ENCODE measurements at regions of chr3 and their contacts with region 1.

Region 1: DNA sequence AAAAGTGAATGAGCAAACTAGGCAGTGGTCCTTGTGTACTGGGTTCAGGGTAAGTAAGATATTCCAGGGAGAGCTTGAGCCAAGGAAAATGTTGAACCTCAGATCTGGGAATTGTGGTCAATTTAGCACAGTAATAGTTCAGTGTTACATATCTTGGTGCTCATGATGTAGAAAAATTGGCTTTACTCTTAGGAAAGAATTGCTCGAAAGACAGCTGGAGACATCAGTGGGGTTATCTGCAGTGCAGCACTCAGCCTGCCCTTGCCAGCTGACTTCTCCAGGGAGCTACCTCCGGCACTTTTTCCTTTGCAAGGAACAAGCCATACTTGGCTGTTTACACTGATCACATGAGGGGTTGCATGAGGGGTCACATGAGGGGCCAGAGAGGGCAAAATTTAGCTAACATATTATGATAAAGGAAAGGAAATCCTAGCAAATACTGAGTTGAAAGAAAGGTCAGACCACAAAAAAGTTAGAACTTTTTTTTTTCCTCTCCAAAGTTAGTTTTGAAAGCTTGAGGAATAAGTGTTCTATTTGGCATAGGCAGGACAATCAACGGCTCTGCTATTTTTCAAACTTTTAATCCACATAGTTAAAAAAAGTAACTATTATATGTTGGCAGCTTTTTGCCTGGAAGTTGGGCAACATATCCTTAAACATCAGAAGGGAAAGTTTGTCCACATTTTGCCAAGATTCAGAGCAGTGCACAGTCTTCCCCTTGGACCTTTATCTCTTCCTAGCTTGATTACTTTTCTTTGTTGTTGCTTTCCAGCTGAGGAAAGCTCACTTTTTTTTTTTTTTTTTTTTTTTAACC is 92.4 kb downstream of the COL6A6 start:
- DNase-seq: peak in 1 of 2 donors; percentile 65
- H3K4me3 ChIP-seq: no peak overlapping the region
- H3K27ac ChIP-seq: peak overlapping the region in 1 of 2 donors; percentile 53
- H3K4me1 ChIP-seq: peaks cover 0 to 2% of the 10 kb centered on the region in 2 donors
- H3K27me3 ChIP-seq: no peaks in the 10 kb centered on the region
- CTCF ChIP-seq: no peak

Region 2: DNA sequence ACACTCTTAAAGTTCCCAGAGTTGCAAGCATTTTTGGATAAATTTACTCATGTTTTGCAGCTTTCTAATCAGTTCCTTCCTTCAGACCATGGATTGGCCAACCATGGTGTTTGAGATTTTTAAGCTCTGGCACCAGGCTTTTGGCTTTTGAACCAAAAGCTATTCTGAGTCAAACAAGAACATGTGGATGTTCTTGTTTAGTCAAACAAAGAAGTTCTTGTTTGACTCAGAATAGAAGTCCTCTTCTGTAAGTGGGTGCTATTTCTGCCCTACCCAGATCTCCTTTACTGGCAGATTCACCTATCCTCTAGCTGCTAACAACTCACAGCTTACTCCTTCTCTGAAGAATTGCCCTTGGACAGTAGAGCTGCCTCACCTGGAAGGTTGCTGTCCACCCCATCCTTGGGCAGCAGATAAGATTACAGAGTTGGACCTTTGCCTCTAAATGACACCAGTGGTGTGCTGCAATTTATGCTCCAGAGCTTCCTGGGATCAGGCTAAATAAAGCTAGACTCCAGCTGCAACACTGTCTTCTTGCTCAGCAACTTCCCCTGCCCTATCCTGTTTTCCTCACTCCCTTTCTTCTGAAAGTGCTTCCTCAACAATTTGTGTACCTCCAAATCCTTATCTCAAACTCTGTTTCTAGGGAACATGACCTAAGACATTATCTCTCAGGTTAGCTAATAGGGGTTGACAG is 26.8 kb before region 1 on chr3:
- intact Hi-C with region 1: loop called (anchors 1 kb)
- DNase-seq: no peak
- H3K4me3 ChIP-seq: no peak overlapping the region
- H3K27ac ChIP-seq: peak overlapping the region; percentile 21 to 68
- H3K4me1 ChIP-seq: no peaks in the 10 kb centered on the region
- H3K27me3 ChIP-seq: no peaks in the 10 kb centered on the region
- CTCF ChIP-seq: no peak

Region 3: GRCh38 chr3:130746246-130747039 is 137.1 kb after region 1 on chr3 and contains the start of gene PIK3R4:
- intact Hi-C with region 1: no loop called
- DNase-seq: peak; percentile 93 to 98
- H3K4me3 ChIP-seq: peak within 1 kb of the TSS; percentile 83 to 95
- H3K27ac ChIP-seq: peak within 1 kb of the TSS; percentile 86 to 90
- H3K4me1 ChIP-seq: peaks cover 2 to 23% of the 10 kb centered on the region in 2 donors
- H3K27me3 ChIP-seq: no peaks in the 10 kb centered on the region
- CTCF ChIP-seq: no peak
- total RNA-seq, gene PIK3R4: 101 TPM